WTC11 (cell line): ENCODE measurements at regions of chr3 and their contacts with region 1.

Region 1: DNA sequence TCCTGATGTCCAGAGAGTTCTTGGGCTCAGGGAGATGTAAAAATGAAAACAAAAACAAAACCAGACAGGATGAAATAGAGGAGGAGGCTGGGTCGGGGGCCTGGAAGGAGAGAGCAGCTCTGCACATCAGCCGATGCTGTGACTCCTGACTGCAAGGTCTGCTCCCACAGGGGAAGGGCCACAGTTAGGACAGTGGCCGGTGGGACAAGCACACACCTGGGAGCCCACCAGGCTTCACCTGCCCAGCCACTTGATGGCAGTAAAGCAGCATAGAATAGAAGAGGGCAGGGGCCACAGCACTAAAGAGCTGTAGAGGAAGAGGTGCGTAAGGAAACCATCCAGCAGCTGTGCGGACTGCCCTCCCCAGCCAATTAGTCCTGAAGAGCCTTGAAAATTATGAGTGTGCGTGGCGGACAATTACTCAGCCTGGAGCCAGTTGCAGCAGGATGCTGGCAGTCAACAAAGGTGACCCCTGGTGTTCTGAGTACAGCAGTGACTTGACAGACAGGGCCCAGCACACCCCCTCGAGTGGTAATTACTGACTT is 29.8 kb downstream of the ALS2CL start:
- DNase-seq: peak; percentile 58
- ATAC-seq: peak; percentile 37
- H3K4me3 Mint-ChIP-seq: no peak overlapping the region
- H3K27ac Mint-ChIP-seq: no peak overlapping the region; the same call in 1 of the 2 replicates
- H3K4me1 Mint-ChIP-seq: peaks cover 54% of the 10 kb centered on the region
- H3K27me3 Mint-ChIP-seq: no peaks in the 10 kb centered on the region; the same call in 1 of the 2 replicates
- CTCF ChIP-seq: no peak

Region 2: DNA sequence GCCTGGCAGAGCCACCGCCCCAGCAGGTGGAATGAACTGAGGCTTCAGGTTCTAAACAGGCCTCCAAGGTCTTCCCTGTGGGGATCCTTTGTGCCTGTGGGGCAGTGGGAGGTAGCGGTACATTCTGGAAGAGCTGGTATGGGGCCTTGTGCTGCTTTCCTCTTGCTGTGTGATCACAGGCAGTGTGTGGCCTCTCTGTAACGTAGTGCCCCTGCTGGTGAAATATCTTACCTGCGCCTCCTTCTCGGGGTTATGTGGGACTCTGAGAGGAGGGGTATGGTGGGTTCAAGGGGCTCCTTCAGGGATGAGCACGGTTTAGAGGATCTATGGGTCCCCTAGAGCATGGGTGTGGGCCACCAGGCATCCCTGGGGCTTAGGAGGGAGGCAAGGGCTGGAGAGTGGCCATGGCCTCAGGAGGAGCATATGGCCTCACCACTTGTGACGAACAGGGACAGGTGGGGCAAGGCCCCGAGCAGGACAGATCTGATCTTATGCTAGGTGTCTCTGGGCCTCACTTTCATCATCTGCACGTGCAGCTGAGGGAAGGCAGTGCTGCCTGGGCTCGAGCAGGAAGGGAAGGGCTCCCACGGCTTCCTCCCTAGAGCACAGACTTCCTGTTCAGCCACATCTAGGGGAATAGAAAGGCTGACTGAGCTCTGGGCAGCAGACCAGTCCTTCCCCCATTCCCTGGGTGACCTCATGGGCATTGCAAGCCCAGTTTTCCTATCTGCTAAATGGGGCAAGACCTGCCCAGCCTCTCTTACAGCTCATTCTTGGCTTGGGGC is 31.7 kb after region 1 on chr3:
- CTCF ChIA-PET with region 1: interaction called, 15 read pairs
- POLR2A ChIA-PET with region 1: no interaction called
- DNase-seq: peak; percentile 69
- ATAC-seq: peak; percentile 67
- H3K4me3 Mint-ChIP-seq: no peak overlapping the region
- H3K27ac Mint-ChIP-seq: no peak overlapping the region; the same call in 1 of the 2 replicates
- H3K4me1 Mint-ChIP-seq: peaks cover 22% of the 10 kb centered on the region
- H3K27me3 Mint-ChIP-seq: peaks cover 26% of the 10 kb centered on the region
- CTCF ChIP-seq: peak; percentile 44; the same call in 1 of the 2 replicates

Region 3: DNA sequence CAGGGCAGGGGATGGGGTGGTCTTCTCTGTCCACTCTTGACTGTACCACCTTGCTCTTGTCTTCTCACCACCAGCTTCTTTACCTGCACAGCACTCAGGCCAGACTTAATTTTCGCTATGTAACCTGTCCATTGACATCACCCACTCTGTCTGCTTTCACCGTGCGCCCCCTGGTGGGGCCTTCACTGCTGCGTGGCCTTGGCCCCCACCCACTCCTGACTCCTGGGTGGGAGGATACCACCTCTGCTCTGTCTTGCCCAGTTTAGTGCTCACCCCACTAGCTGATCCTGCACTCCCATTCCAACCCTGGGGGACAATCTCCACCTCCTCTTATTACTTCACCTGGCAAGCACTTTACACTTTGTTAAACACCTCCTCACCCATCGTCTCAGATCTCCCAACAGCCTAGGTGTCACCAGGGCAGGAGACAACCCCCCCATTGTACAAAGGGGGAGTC is 231.6 kb after region 1 on chr3:
- CTCF ChIA-PET with region 1: interaction called, 11 read pairs
- POLR2A ChIA-PET with region 1: no interaction called
- DNase-seq: peak; percentile 63
- ATAC-seq: no peak
- H3K4me3 Mint-ChIP-seq: no peak overlapping the region
- H3K27ac Mint-ChIP-seq: no peak overlapping the region
- H3K4me1 Mint-ChIP-seq: peaks cover 11% of the 10 kb centered on the region
- H3K27me3 Mint-ChIP-seq: peaks cover 73% of the 10 kb centered on the region
- CTCF ChIP-seq: peak; percentile 52